ENCODE measurements at regions of chr2 and their contacts with region 1.

Region 1: GRCh38 chr2:50480507-50480906 is 551.4 kb downstream of the NRXN1 start:
- DNase-seq: no peak
- ATAC-seq: no peak; a peak in 1 of 6 replicates
- H3K4me3 ChIP-seq: no peak overlapping the region
- H3K27ac ChIP-seq: no peak overlapping the region
- H3K4me1 ChIP-seq: no peaks in the 10 kb centered on the region
- CTCF ChIP-seq: no peak
- EP300 ChIP-seq: no peak
- POLR2A ChIP-seq: no peak
- RAD21 ChIP-seq: no peak

Region 2: DNA sequence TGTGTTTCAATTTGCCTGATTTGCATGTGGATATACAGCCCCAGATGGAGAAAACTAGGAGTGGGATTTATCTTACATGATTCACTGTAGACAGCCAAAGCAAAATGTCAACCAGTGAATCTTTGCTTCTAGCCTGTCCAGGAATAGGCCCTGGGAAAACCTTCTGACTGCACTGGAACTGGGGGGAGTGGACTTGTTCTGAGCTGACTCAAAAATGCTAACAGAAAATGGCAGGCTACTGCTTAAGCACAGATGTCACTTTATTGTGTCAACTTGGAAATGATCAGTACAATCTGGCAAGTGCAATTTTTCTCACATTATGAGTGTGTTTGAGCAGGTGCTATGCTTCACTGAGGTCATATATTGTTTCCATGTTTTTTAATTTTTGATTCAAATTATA is 42.2 kb before region 1 on chr2:
- CTCF ChIA-PET with region 1: no interaction called
- POLR2A ChIA-PET with region 1: no interaction called
- DNase-seq: no peak
- ATAC-seq: no peak
- H3K4me3 ChIP-seq: no peak overlapping the region
- H3K27ac ChIP-seq: no peak overlapping the region
- H3K4me1 ChIP-seq: no peaks in the 10 kb centered on the region
- CTCF ChIP-seq: no peak
- EP300 ChIP-seq: no peak
- POLR2A ChIP-seq: no peak
- RAD21 ChIP-seq: no peak

Region 3: GRCh38 chr2:50466685-50467084 is 13.8 kb before region 1 on chr2:
- CTCF ChIA-PET with region 1: no interaction called
- POLR2A ChIA-PET with region 1: no interaction called
- DNase-seq: no peak
- ATAC-seq: no peak
- H3K4me3 ChIP-seq: no peak overlapping the region
- H3K27ac ChIP-seq: no peak overlapping the region
- H3K4me1 ChIP-seq: no peaks in the 10 kb centered on the region
- CTCF ChIP-seq: no peak
- EP300 ChIP-seq: no peak
- POLR2A ChIP-seq: no peak
- RAD21 ChIP-seq: no peak

Region 4: DNA sequence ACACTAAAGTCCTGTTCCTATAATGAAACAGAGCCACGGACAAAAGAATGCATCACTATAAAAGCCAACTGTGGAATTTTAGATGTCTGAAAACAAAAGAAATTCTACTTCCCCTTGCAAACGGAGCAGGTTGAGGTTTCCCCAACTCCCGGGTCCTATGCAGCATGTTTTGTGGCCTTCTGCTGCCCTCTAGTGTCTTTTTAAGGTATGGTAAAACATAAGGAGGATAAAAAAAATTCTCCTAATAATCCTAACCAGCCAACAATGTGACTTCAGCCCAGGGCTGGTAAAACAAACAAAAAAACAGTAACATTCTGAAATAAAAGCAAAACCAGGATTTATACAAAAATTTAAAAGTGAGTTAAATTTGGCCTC is 12.0 kb after region 1 on chr2:
- CTCF ChIA-PET with region 1: interaction called, 14 read pairs
- POLR2A ChIA-PET with region 1: no interaction called
- DNase-seq: peak; percentile 48 to 64
- ATAC-seq: peak; percentile 78 to 92
- H3K4me3 ChIP-seq: no peak overlapping the region
- H3K27ac ChIP-seq: no peak overlapping the region
- H3K4me1 ChIP-seq: no peaks in the 10 kb centered on the region
- CTCF ChIP-seq: peak; percentile 78
- EP300 ChIP-seq: no peak
- POLR2A ChIP-seq: no peak
- RAD21 ChIP-seq: peak; percentile 75 to 78